Activated T-helper 2 cell treated with anti-CD3 and anti-CD28 coated beads, Interferon-gamma antibody, Interleukin-2, Interleukin-4, amounts not matched to agents 10 μg/mL and 5 μg/mL and 100 μg/mL, durations not matched to agents 14 hours and 24 hours and 36 hours (primary cell): ENCODE measurements at regions of chr6 and their contacts with region 1.

Region 1: GRCh38 chr6:106519460-106520394 is 109.6 kb downstream of the RTN4IP1 start:
- DNase-seq: peak; percentile 79
- H3K4me3 Mint-ChIP-seq: peak overlapping the region; percentile 90
- H3K27ac Mint-ChIP-seq: peak overlapping the region; percentile 97
- H3K4me1 Mint-ChIP-seq: peaks cover 57% of the 10 kb centered on the region
- H3K27me3 Mint-ChIP-seq: no peaks in the 10 kb centered on the region

Region 2: GRCh38 chr6:105793130-105793529 is 726.6 kb before region 1 on chr6:
- intact Hi-C with region 1: loop called (anchors 10 kb)
- DNase-seq: no peak
- H3K4me3 Mint-ChIP-seq: no peak overlapping the region
- H3K27ac Mint-ChIP-seq: peak overlapping the region; percentile 34
- H3K4me1 Mint-ChIP-seq: peaks cover 86% of the 10 kb centered on the region
- H3K27me3 Mint-ChIP-seq: no peaks in the 10 kb centered on the region

Region 3: DNA sequence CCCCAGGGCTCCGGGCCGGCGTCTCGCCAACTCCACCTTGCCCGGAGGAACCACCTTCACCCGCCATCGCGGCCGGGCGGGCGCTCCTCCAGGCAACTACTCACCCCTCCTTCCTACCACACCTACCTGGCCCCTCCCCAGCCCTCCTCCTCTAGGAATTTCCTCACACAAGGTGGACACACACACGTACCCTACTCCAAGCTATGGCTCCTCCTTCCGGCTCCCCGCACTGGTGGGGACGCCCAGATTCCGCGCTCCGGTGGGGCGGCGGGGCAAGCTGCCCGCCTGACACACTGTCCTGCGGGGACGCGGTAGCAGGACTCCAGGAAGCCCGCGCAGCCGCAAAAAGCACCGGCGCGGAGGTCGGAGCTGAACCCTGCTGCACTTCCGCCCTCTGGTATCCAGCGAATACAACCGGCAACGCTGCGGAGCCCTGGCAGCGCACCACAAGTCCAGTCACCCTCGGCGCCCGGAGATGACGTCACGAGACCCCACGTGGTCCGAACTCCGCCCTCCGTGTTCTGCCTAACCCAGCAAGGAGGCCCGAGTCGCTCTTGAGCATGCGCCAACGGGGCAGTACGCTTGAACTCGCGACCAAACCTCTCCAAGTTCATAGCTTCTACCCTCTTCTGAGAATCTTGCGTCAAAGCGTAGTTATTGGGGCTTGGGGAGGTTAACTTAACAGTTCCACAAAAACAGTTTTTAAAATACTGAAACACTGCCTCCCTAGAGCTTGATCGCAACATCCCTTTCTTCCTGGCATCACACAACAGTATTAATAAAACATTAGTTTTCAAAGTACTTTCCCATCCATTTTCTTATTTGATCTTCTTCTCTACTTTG is 194.2 kb before region 1 on chr6 and contains the start of gene ATG5:
- intact Hi-C with region 1: loop called (anchors 5 kb)
- DNase-seq: peak; percentile 100
- H3K4me3 Mint-ChIP-seq: peak within 1 kb of the TSS; percentile 100
- H3K27ac Mint-ChIP-seq: peak within 1 kb of the TSS; percentile 99
- H3K4me1 Mint-ChIP-seq: peaks cover 30% of the 10 kb centered on the region
- H3K27me3 Mint-ChIP-seq: peaks cover 22% of the 10 kb centered on the region
- total RNA-seq, gene ATG5: 33.1 and 34.7 TPM in 2 replicates

Region 4: GRCh38 chr6:106546691-106547414 is 27.1 kb after region 1 on chr6:
- intact Hi-C with region 1: loop called (anchors 2 kb)
- DNase-seq: no peak
- H3K4me3 Mint-ChIP-seq: no peak overlapping the region
- H3K27ac Mint-ChIP-seq: peak overlapping the region; percentile 77
- H3K4me1 Mint-ChIP-seq: peaks cover 31% of the 10 kb centered on the region
- H3K27me3 Mint-ChIP-seq: no peaks in the 10 kb centered on the region

Region 5: GRCh38 chr6:106574741-106575458 is 55.2 kb after region 1 on chr6:
- intact Hi-C with region 1: no loop called
- DNase-seq: no peak
- H3K4me3 Mint-ChIP-seq: no peak overlapping the region
- H3K27ac Mint-ChIP-seq: peak overlapping the region; percentile 2
- H3K4me1 Mint-ChIP-seq: peaks cover 5% of the 10 kb centered on the region
- H3K27me3 Mint-ChIP-seq: no peaks in the 10 kb centered on the region

Region 6: DNA sequence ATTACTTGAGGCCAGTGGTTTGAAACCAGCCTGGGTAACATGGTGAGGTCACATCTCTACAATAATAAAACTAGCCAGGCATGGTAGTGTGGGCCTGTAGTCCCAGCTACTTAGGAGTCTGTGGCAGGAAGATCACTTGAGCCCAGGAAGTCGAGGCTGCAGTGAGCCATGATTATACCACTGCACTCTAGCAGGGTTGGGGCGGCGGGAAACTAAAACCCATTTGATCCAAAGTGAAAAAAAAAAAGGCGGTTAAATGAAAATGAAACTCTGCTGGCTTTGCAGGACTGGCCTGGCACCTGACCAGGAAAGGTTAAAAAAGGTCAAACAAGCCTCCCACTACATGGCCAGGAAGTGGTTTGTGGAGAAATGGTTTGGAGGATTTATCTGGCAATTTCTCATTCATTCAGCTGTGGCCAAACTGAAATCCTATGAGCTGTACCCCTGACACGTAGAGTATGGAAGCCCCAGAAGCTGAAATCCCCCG is 544.9 kb after region 1 on chr6:
- intact Hi-C with region 1: loop called (anchors 10 kb)
- DNase-seq: peak; percentile 38
- H3K4me3 Mint-ChIP-seq: no peak overlapping the region
- H3K27ac Mint-ChIP-seq: peak overlapping the region; percentile 95
- H3K4me1 Mint-ChIP-seq: peaks cover 66% of the 10 kb centered on the region
- H3K27me3 Mint-ChIP-seq: no peaks in the 10 kb centered on the region